ENCODE measurements at regions of chr19 and their contacts with region 1.

Region 1: GRCh38 chr19:37902668-37903067 is 3.7 kb downstream of the WDR87 start:
- DNase-seq: no peak
- H3K4me3 ChIP-seq: no peak overlapping the region
- H3K27me3 ChIP-seq: no peaks in the 10 kb centered on the region
- CTCF ChIP-seq: peak; percentile 85

Region 2: GRCh38 chr19:37941782-37942515 is 39.3 kb after region 1 on chr19:
- CTCF ChIA-PET with region 1: no interaction called
- POLR2A ChIA-PET with region 1: no interaction called
- DNase-seq: no peak
- H3K4me3 ChIP-seq: no peak overlapping the region
- H3K27me3 ChIP-seq: no peaks in the 10 kb centered on the region
- CTCF ChIP-seq: no peak

Region 3: GRCh38 chr19:38020311-38020710 is 117.6 kb after region 1 on chr19:
- CTCF ChIA-PET with region 1: interaction called, 10 read pairs
- POLR2A ChIA-PET with region 1: no interaction called
- DNase-seq: no peak
- H3K4me3 ChIP-seq: no peak overlapping the region
- H3K27me3 ChIP-seq: no peaks in the 10 kb centered on the region
- CTCF ChIP-seq: no peak

Region 4: GRCh38 chr19:38073841-38074685 is 171.4 kb after region 1 on chr19:
- CTCF ChIA-PET with region 1: interaction called, 20 read pairs
- POLR2A ChIA-PET with region 1: no interaction called
- DNase-seq: no peak
- H3K4me3 ChIP-seq: no peak overlapping the region
- H3K27me3 ChIP-seq: no peaks in the 10 kb centered on the region
- CTCF ChIP-seq: peak; percentile 46

Region 5: GRCh38 chr19:38095411-38096308 is 193.0 kb after region 1 on chr19:
- CTCF ChIA-PET with region 1: interaction called, 31 read pairs
- POLR2A ChIA-PET with region 1: no interaction called
- DNase-seq: peak; percentile 37
- H3K4me3 ChIP-seq: no peak overlapping the region
- H3K27me3 ChIP-seq: no peaks in the 10 kb centered on the region
- CTCF ChIP-seq: peak; percentile 82

Region 6: GRCh38 chr19:38142176-38143035 is 239.7 kb after region 1 on chr19:
- CTCF ChIA-PET with region 1: interaction called, 29 read pairs
- POLR2A ChIA-PET with region 1: no interaction called
- DNase-seq: no peak
- H3K4me3 ChIP-seq: no peak overlapping the region
- H3K27me3 ChIP-seq: no peaks in the 10 kb centered on the region
- CTCF ChIP-seq: peak; percentile 86

Region 7: DNA sequence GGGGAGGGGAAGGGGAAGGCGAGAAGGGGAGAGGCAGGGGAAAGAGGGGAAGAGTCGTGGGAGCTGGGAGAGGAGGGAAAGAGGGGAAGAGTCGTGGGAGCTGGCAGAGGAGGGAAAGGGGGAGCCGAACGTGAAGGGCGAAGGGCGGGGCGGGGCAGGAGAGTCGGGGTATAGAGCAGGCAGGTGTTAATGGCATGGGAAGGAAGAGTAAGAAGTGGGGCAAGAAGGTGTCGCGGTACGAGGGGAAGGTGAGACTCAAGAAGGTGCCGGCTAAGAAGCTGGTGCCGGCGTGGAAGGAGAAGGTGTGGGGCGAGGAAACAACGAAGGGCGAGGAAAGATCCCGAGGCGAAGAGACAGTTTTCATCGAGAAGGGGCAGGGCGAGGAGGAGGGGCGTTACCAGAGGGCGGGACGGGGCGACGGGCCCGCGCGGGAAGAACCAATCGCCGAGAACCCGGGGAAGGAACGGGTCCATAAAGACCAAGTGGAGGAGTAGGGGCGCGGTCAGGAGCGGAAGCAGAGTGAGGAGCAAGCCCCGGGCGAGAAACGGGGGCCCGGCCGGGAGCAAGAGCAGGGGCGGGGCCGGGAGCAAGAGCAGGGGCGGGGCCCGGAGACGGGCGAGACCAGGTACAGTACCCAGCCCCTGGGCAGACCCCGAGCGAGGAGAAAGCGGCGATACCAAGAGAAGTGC is 433.4 kb after region 1 on chr19:
- CTCF ChIA-PET with region 1: interaction called, 10 read pairs
- POLR2A ChIA-PET with region 1: no interaction called
- DNase-seq: peak; percentile 80
- H3K4me3 ChIP-seq: peak overlapping the region; percentile 76
- H3K27me3 ChIP-seq: no peaks in the 10 kb centered on the region
- CTCF ChIP-seq: no peak

Measured in BJ (cell line).